Pancreas (tissue), 10 donors: ENCODE measurements at regions of chr13 and their contacts with region 1.

Region 1: GRCh38 chr13:22135441-22136130 is 464.7 kb downstream of the FGF9 start:
- DNase-seq: no peak
- ATAC-seq: no peak
- H3K4me3 ChIP-seq: no peak overlapping the region
- H3K27ac ChIP-seq: no peak overlapping the region
- H3K4me1 ChIP-seq: no peaks in the 10 kb centered on the region
- H3K27me3 ChIP-seq: no peaks in the 10 kb centered on the region
- CTCF ChIP-seq: no peak

Region 2: DNA sequence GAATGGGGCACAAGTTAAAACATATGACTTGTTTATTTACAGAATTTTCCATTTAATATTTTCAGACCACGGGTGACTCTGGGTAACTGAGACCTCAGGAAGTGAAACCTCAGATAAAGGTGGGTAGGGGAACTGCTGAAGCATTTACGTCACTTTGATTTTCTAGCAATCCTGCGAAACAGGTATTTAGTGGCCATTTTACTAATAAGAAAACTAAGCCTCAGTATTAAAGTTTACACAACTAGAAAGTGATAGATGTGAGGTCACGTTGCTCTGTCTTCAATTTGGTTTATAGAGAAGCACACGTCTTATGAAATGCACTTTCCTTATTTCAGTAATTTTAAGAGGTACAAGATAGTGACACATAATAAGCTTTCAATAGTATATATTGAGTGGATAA is 61.9 kb before region 1 on chr13:
- intact Hi-C with region 1: loop called in 1 of 3 experiments (anchors 10 kb)
- DNase-seq: no peak
- ATAC-seq: no peak
- H3K4me3 ChIP-seq: no peak overlapping the region
- H3K27ac ChIP-seq: no peak overlapping the region
- H3K4me1 ChIP-seq: no peaks in the 10 kb centered on the region
- H3K27me3 ChIP-seq: no peaks in the 10 kb centered on the region
- CTCF ChIP-seq: no peak